GM10248 (cell line): ENCODE measurements at regions of chr11 and their contacts with region 1.

Region 1: GRCh38 chr11:65225279-65226102 is 36.3 kb upstream of the POLA2 start:
- DNase-seq: peak; percentile 84
- CTCF ChIP-seq: peak; percentile 53

Region 2: DNA sequence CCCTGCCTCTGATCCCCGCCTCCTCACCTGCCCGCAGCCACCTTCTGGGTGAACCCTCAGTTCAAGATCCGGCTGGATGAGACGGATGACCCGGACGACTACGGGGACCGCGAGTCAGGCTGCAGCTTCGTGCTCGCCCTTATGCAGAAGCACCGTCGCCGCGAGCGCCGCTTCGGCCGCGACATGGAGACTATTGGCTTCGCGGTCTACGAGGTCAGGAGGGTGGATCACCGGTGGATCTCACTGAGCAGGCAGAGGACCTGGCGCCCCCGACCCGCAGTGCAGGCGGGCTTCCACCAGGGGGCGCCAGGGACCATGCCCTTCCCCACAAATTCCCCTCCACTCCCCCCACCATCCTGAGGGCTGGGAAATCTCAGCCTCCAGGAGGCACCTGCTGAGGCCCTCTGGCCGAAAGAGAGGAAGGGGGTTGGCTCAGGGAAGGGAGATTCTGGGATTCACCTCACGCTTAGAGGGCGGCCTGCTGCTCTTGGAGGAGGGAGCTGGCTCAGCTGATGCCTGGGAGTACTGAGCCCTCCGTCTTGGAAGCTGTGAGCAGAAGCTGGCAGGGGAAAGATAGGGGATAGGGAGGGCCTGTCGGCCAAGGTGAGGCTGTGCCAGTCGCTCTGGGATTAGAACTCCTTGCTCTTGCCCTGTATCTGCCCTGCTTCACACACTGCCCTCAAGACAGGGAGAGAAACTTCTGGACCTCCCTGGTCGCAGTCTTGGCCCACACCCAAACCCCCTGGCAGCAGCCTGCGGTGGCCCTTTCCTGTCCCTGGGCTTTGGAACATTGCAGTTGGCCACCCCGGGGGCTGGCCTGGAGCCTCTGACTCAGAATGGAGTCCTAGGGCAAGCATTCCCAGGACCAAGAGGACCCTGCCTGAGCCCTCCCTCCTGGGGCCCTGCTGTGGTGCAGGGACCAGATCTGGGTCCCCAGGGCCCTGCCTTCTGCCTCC is 20.6 kb before region 1 on chr11:
- CTCF ChIA-PET with region 1: interaction called, 20 read pairs
- POLR2A ChIA-PET with region 1: no interaction called
- DNase-seq: peak; percentile 82
- CTCF ChIP-seq: peak; percentile 87

Region 3: DNA sequence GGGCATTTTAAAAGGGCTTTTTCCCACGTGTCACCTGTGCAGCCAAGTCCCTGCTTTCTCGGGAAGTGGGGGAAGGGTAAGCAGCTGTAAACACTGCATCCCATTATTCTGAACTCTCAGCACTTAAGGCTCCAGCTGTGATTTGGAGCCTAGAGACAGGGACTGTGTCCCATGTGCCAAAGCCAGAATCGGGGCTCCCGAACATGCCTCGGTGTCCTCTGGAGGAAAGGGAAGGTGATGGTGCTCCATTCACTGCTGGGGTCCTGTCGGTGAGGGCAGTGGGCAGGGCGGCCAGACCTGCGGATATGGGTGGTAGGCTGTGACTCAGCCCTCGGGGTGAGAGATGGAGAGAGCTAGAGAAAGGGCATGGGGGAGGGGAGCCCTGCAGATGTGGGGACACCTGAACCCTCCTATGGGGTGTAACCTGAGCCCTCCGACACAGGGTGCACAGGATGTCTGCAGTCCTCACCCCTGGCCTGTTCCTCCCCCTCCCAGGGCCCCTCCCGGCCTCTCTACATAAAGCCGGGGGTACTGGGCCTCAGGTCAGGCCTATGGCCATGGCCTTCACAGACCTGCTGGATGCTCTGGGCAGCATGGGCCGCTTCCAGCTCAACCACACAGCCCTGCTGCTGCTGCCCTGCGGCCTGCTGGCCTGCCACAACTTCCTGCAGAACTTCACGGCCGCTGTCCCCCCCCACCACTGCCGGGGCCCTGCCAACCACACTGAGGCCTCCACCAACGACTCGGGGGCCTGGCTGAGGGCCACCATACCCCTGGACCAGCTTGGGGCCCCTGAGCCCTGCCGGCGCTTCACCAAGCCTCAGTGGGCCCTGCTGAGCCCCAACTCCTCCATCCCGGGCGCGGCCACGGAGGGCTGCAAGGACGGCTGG is 11.9 kb before region 1 on chr11:
- CTCF ChIA-PET with region 1: interaction called, 20 read pairs
- POLR2A ChIA-PET with region 1: no interaction called
- DNase-seq: no peak
- CTCF ChIP-seq: no peak

Region 4: GRCh38 chr11:65251476-65251875 is 26.0 kb after region 1 on chr11:
- CTCF ChIA-PET with region 1: interaction called, 37 read pairs
- POLR2A ChIA-PET with region 1: no interaction called
- DNase-seq: no peak
- CTCF ChIP-seq: no peak